ENCODE measurements at regions of chr7 and their contacts with region 1.

Region 1: DNA sequence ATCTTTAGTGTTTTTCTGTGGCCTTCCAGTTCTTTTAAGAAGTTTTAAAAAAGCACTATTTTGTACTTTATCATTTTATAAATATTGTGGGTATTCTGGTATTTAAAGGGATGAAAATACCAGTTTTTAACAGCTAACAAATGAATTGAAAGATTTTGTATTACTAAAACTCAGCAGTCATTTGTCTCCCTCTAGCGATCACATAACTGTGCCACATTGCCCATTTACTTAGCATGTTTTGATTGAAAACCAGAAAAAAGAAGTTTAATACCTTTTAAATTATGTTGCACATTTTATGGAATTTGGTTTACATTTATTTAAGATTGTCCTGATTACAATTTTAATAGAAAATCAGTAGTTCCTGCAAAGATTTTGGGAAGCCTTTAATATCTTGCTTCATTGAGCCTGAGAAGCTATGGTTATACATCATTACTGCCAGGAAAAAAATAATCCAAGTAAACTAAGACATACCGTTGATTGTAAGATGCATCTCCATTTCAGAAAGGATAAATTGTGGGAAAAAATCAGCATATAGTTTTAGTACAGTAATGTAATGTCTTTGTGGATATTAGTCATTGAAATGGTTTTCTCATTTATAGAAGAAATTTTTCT is 34.9 kb downstream of the TAX1BP1 start:
- DNase-seq: no peak
- CTCF ChIP-seq: peak; percentile 69

Region 2: GRCh38 chr7:27745064-27745583 is 29.7 kb before region 1 on chr7:
- CTCF ChIA-PET with region 1: interaction called, 17 read pairs
- POLR2A ChIA-PET with region 1: no interaction called
- DNase-seq: no peak
- CTCF ChIP-seq: peak; percentile 41

Region 3: DNA sequence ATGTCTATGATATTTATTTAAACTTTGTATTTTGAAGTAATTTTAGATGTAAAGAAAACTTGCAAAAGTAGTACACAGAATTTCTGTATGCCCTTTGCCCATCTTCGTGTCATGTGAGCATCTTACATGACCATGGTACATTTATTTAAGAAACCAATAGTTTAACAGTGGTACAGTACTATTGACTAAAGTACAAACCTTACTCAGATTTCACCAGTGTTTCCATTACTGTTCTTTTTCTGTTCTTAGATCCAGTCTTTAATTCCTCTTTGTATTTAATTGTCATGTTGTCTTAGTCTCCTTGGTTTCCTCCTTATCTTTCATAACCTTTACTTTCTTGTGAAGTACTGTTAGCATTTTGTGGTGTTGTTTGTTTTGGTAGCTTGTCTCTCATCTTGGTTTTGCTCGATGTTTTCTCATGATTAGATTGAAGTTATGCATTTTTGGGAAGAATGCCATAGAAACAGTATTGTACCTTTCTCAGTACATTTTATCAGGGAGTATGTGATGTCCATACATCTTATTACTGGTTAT is 10.8 kb before region 1 on chr7:
- CTCF ChIA-PET with region 1: interaction called, 38 read pairs
- POLR2A ChIA-PET with region 1: no interaction called
- DNase-seq: no peak
- CTCF ChIP-seq: no peak

Region 4: GRCh38 chr7:27834179-27834921 is 59.5 kb after region 1 on chr7:
- CTCF ChIA-PET with region 1: no interaction called
- POLR2A ChIA-PET with region 1: no interaction called
- DNase-seq: no peak
- CTCF ChIP-seq: no peak

Measured in GM10248 (cell line).